ENCODE measurements at regions of chr22 and their contacts with region 1.

Region 1: DNA sequence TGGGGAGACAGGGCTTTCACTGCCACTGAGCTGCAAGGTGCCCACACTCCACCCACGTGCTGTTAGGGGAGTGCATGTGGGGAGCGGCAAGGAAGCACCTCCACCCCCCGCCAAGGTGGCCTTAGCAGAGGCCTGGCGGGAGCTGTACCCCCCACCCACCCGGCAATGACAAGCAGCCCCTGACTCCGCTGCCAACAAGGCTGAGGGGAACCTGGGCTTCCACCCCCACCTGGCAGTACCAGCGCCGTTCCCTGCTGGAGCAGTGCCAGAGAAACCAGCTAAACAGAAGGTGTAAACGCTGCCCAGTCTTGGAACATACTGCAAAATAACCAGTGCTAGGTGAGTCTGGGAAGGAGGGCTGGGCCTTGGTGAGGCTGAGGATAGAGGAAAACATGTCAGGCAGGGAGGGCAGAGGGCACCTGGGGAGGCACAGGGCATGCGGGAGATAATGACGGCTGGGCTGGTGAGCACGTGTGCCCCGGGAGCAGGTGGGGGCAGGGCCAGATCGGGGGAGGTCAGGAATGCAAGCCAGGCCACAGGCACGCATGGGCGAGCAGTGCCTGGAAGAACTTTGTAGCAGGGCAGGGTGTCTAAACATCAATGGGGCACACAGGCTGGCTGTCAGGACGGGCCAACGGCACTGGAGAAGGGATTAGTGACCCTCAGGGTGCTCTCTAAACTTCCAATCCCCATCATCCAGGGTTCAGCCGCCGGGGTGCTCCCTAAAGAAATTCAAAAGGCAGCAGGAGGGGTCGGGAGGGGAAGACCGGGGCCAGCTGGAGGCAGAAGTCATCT is 6.6 kb downstream of the CERK start:
- DNase-seq: peak; percentile 78
- ATAC-seq: peak; percentile 95
- H3K4me3 ChIP-seq: peak overlapping the region in 2 of 3 experiments; percentile 16 to 57; a peak in 3 of 6 replicates
- H3K27ac ChIP-seq: peak overlapping the region; percentile 82
- H3K4me1 ChIP-seq: peaks cover 59% of the 10 kb centered on the region
- H3K27me3 ChIP-seq: no peaks in the 10 kb centered on the region
- CTCF ChIP-seq: peak; percentile 17; the same call in 1 of the 2 replicates
- EP300 ChIP-seq: peak; percentile 54 to 88; a peak in 2 of 4 replicates
- POLR2A ChIP-seq: peak in 1 of 2 experiments; percentile 57; a peak in 2 of 4 replicates
- RAD21 ChIP-seq: no peak; the same call in 1 of the 2 replicates

Region 2: GRCh38 chr22:46754110-46754799 is 22.8 kb after region 1 on chr22:
- CTCF ChIA-PET with region 1: no interaction called
- POLR2A ChIA-PET with region 1: interaction called, 10 read pairs
- in situ Hi-C with region 1: no loop called
- intact Hi-C with region 1: no loop called
- DNase-seq: peak; percentile 92
- ATAC-seq: peak; percentile 87
- H3K4me3 ChIP-seq: peak overlapping the region; percentile 12 to 51 (median 16); a peak in 5 of 6 replicates
- H3K27ac ChIP-seq: peak overlapping the region; percentile 78
- H3K4me1 ChIP-seq: peaks cover 58% of the 10 kb centered on the region
- H3K27me3 ChIP-seq: no peaks in the 10 kb centered on the region; a peak in 1 of 5 replicates
- CTCF ChIP-seq: 0 out of 2 replicates have a peak, but pooled peaks have one; percentile 3
- EP300 ChIP-seq: peak in 1 of 2 experiments; percentile 49; a peak in 1 of 4 replicates
- POLR2A ChIP-seq: peak; percentile 65 to 94; a peak in 3 of 4 replicates
- RAD21 ChIP-seq: no peak

Measured in HepG2 (cell line).